Stomach (tissue), 19 donors: ENCODE measurements at regions of chr2 and their contacts with region 1.

Region 1: GRCh38 chr2:100381240-100381639 is 36.2 kb downstream of the CHST10 start:
- DNase-seq: peak; percentile 88 to 89
- H3K4me3 ChIP-seq: no peak overlapping the region
- H3K27ac ChIP-seq: no peak overlapping the region
- H3K4me1 ChIP-seq: peaks cover 0 to 7% (median 0%) of the 10 kb centered on the region in 4 donors
- H3K27me3 ChIP-seq: no peaks in the 10 kb centered on the region
- CTCF ChIP-seq: peak in 5 of 7 experiments; percentile 83 to 94 (median 86)
- EP300 ChIP-seq: no peak
- POLR2A ChIP-seq: no peak

Region 2: GRCh38 chr2:100262555-100263320 is 118.5 kb before region 1 on chr2:
- intact Hi-C with region 1: loop called (anchors 5 kb)
- DNase-seq: peak; percentile 71 to 79
- H3K4me3 ChIP-seq: no peak overlapping the region
- H3K27ac ChIP-seq: no peak overlapping the region
- H3K4me1 ChIP-seq: no peaks in the 10 kb centered on the region
- H3K27me3 ChIP-seq: peaks cover 0 to 6% (median 0%) of the 10 kb centered on the region in 3 donors
- CTCF ChIP-seq: peak in 6 of 7 experiments; percentile 53 to 99 (median 96)
- EP300 ChIP-seq: no peak
- POLR2A ChIP-seq: no peak

Region 3: DNA sequence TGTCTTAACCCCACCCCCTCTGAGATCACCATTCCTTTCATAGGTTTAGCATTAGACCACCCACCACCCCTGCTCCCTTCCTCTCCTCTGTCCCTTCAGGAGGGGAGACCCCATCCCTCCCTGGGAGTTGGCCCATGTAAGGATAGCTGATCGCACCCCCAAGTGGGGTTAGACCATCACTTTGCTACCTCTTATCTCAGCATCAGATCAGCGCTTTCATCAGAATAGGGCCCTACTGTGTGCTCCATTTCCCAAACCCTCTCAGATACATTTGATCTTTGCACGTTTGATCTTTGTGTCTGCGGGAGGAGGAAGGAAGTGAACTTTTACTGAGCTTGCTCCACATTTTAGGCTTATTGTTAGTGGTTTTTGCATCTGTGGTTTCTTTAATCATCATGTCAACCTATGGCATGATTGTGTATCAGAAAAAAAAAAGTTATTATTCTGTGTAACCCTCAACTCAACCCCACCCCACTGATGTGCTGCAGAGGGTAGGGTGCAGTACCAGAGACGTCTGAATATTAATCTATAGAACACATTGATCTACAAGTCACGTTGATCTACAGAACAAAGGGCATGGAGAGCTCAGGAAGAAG is 262.8 kb after region 1 on chr2:
- intact Hi-C with region 1: no loop called
- DNase-seq: peak in 1 of 2 donors; percentile 19
- H3K4me3 ChIP-seq: no peak overlapping the region
- H3K27ac ChIP-seq: no peak overlapping the region
- H3K4me1 ChIP-seq: no peaks in the 10 kb centered on the region
- H3K27me3 ChIP-seq: peaks cover 0 to 27% (median 0%) of the 10 kb centered on the region in 3 donors
- CTCF ChIP-seq: no peak
- EP300 ChIP-seq: no peak
- POLR2A ChIP-seq: no peak